ENCODE measurements at regions of chr15 and their contacts with region 1.

Region 1: GRCh38 chr15:79989682-79990081 is 18.7 kb upstream of the BCL2A1 start:
- DNase-seq: no peak
- ATAC-seq: no peak
- H3K4me3 ChIP-seq: no peak overlapping the region
- H3K27ac ChIP-seq: no peak overlapping the region
- H3K4me1 ChIP-seq: peaks cover 18% of the 10 kb centered on the region
- H3K27me3 ChIP-seq: no peaks in the 10 kb centered on the region
- CTCF ChIP-seq: no peak
- EP300 ChIP-seq: no peak
- POLR2A ChIP-seq: no peak
- RAD21 ChIP-seq: no peak

Region 2: GRCh38 chr15:79769069-79769481 is 220.6 kb before region 1 on chr15:
- CTCF ChIA-PET with region 1: interaction called, 6 read pairs
- POLR2A ChIA-PET with region 1: no interaction called
- RAD21 ChIA-PET with region 1: interaction called, 3 read pairs
- SMC1A ChIA-PET with region 1: interaction called, 5 read pairs
- in situ Hi-C with region 1: loop called (anchors 10 kb)
- intact Hi-C with region 1: loop called (anchors 2 kb)
- DNase-seq: no peak
- ATAC-seq: peak; percentile 74
- H3K4me3 ChIP-seq: no peak overlapping the region
- H3K27ac ChIP-seq: no peak overlapping the region
- H3K4me1 ChIP-seq: no peaks in the 10 kb centered on the region
- H3K27me3 ChIP-seq: no peaks in the 10 kb centered on the region; a peak in 1 of 4 replicates
- CTCF ChIP-seq: peak; percentile 37 to 58 (median 45)
- EP300 ChIP-seq: no peak
- POLR2A ChIP-seq: no peak
- RAD21 ChIP-seq: peak; percentile 68

Region 3: DNA sequence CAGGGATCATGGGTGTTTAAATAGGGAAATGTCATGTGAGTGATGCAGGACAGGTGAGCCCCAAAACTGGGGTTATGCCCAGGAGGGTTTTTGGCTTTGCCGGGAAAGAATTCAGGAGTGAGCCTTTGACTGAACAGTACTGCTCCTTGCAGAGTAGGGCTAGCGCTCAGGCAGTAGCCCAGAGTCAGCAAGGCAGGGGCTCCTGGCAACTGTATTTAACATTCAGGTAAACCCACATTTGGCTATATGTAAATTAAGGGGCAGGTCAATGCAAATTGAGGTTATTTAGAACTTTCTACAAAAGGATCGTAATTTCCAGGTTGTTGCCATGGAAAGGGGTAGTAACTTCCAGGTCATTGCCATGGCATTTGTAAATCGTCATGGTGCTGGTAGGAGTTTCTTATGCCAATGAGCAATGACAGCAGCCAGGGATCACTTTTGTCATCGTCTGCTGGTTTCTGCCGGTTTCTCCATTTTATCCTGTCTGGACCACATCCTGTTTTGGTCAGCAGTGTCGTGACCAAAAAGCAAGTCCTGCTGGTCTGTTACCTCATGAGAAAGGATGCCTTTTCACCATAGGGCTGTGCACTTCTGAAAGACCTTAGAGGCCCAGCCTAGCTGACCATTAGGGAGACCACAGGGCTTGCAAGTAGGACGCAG is 117.2 kb before region 1 on chr15:
- CTCF ChIA-PET with region 1: interaction called, 11 read pairs
- POLR2A ChIA-PET with region 1: no interaction called
- RAD21 ChIA-PET with region 1: no interaction called
- SMC1A ChIA-PET with region 1: interaction called, 6 read pairs
- in situ Hi-C with region 1: no loop called
- intact Hi-C with region 1: no loop called
- DNase-seq: no peak
- ATAC-seq: peak; percentile 54
- H3K4me3 ChIP-seq: no peak overlapping the region
- H3K27ac ChIP-seq: no peak overlapping the region
- H3K4me1 ChIP-seq: no peaks in the 10 kb centered on the region
- H3K27me3 ChIP-seq: no peaks in the 10 kb centered on the region
- CTCF ChIP-seq: no peak
- EP300 ChIP-seq: no peak
- POLR2A ChIP-seq: no peak
- RAD21 ChIP-seq: no peak

Region 4: GRCh38 chr15:79901958-79902357 is 87.7 kb before region 1 on chr15:
- CTCF ChIA-PET with region 1: interaction called, 51 read pairs
- POLR2A ChIA-PET with region 1: interaction called, 9 read pairs
- RAD21 ChIA-PET with region 1: interaction called, 45 read pairs
- SMC1A ChIA-PET with region 1: interaction called, 27 read pairs
- in situ Hi-C with region 1: no loop called
- intact Hi-C with region 1: loop called (anchors 1 kb)
- DNase-seq: peak; percentile 90
- ATAC-seq: peak; percentile 42
- H3K4me3 ChIP-seq: no peak overlapping the region
- H3K27ac ChIP-seq: peak overlapping the region; percentile 36
- H3K4me1 ChIP-seq: peaks cover 33% of the 10 kb centered on the region
- H3K27me3 ChIP-seq: no peaks in the 10 kb centered on the region
- CTCF ChIP-seq: peak in 1 of 3 experiments; percentile 9; a peak in 1 of 6 replicates
- EP300 ChIP-seq: no peak
- POLR2A ChIP-seq: no peak
- RAD21 ChIP-seq: no peak

Region 5: DNA sequence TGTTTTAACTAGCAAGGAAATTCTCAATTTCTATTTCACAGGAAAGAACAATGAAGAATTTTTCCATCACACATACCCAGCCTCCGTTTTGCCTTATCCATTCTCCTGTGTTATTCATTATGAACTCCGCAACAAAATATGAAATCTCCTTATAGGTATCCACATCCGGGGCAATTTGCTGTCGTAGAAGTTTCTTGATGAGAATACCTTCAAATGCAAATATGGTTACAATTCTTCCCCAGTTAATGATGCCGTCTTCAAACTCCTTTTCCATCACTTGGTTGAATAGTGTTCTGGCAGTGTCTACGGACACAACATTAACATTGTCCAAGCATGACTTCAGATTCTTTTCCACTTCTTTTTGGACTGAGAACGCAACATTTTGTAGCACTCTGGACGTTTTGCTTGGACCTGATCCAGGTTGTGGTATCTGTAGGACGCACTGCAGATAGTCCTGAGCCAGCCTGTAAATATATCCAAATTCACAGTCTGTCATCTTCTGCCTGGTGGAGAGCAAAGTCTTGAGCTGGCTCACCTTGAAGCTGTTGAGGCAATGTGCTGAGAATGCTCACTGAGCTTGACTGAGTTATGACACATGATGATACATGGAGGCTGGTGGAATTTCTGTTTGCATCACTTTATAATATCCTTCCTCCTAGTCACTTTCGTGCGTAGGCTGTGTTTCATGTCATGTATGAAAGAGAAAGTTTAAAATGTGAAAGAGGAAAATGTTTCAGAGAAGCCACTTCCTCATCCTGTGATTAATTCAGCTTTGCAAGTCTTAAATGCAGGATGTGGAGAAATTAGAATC is 18.9 kb before region 1 on chr15 and contains the start of gene BCL2A1:
- CTCF ChIA-PET with region 1: interaction called, 28 read pairs
- POLR2A ChIA-PET with region 1: interaction called, 3 read pairs
- RAD21 ChIA-PET with region 1: interaction called, 42 read pairs
- SMC1A ChIA-PET with region 1: interaction called, 30 read pairs
- in situ Hi-C with region 1: no loop called
- intact Hi-C with region 1: loop called (anchors 2 kb)
- DNase-seq: peak; percentile 96
- ATAC-seq: peak; percentile 72
- H3K4me3 ChIP-seq: peak within 1 kb of the TSS; percentile 88
- H3K27ac ChIP-seq: peak within 1 kb of the TSS; percentile 88
- H3K4me1 ChIP-seq: peaks cover 26% of the 10 kb centered on the region
- H3K27me3 ChIP-seq: no peaks in the 10 kb centered on the region
- CTCF ChIP-seq: no peak
- EP300 ChIP-seq: peak; percentile 93 to 94
- POLR2A ChIP-seq: peak; percentile 95
- RAD21 ChIP-seq: no peak; the same call in 1 of the 2 replicates
- polyA plus RNA-seq, gene BCL2A1: 536 to 570 TPM

Region 6: GRCh38 chr15:80010131-80010673 is 20.5 kb after region 1 on chr15:
- CTCF ChIA-PET with region 1: interaction called, 10 read pairs
- POLR2A ChIA-PET with region 1: no interaction called
- RAD21 ChIA-PET with region 1: interaction called, 7 read pairs
- SMC1A ChIA-PET with region 1: interaction called, 25 read pairs
- in situ Hi-C with region 1: no loop called
- intact Hi-C with region 1: no loop called
- DNase-seq: no peak
- ATAC-seq: peak; percentile 61
- H3K4me3 ChIP-seq: peak overlapping the region; percentile 32; the same call in 1 of the 2 replicates
- H3K27ac ChIP-seq: peak overlapping the region; percentile 93
- H3K4me1 ChIP-seq: peaks cover 43% of the 10 kb centered on the region
- H3K27me3 ChIP-seq: no peaks in the 10 kb centered on the region
- CTCF ChIP-seq: no peak
- EP300 ChIP-seq: no peak
- POLR2A ChIP-seq: no peak
- RAD21 ChIP-seq: no peak

Region 7: GRCh38 chr15:80099241-80099640 is 109.6 kb after region 1 on chr15:
- CTCF ChIA-PET with region 1: no interaction called
- POLR2A ChIA-PET with region 1: no interaction called
- RAD21 ChIA-PET with region 1: no interaction called
- SMC1A ChIA-PET with region 1: no interaction called
- in situ Hi-C with region 1: no loop called
- intact Hi-C with region 1: no loop called
- DNase-seq: no peak
- ATAC-seq: peak; percentile 73
- H3K4me3 ChIP-seq: peak overlapping the region; percentile 51
- H3K27ac ChIP-seq: peak overlapping the region; percentile 64
- H3K4me1 ChIP-seq: peaks cover 14% of the 10 kb centered on the region
- H3K27me3 ChIP-seq: no peaks in the 10 kb centered on the region
- CTCF ChIP-seq: no peak
- EP300 ChIP-seq: no peak
- POLR2A ChIP-seq: no peak
- RAD21 ChIP-seq: no peak

Measured in GM12878 (cell line).